ENCODE measurements at regions of chr5 and their contacts with region 1.

Region 1: GRCh38 chr5:139968547-139969261 is 74.4 kb downstream of the NRG2 start:
- DNase-seq: peak; percentile 83 to 87
- ATAC-seq: peak; percentile 94 to 97 (median 96)
- H3K4me3 ChIP-seq: peak overlapping the region in 1 of 10 donors; percentile 13
- H3K27ac ChIP-seq: peak overlapping the region in 1 of 10 donors; percentile 24
- H3K4me1 ChIP-seq: peaks cover 8 to 48% (median 18%) of the 10 kb centered on the region in 9 donors
- H3K27me3 ChIP-seq: no peaks in the 10 kb centered on the region
- CTCF ChIP-seq: peak; percentile 95 to 100 (median 99)

Region 2: DNA sequence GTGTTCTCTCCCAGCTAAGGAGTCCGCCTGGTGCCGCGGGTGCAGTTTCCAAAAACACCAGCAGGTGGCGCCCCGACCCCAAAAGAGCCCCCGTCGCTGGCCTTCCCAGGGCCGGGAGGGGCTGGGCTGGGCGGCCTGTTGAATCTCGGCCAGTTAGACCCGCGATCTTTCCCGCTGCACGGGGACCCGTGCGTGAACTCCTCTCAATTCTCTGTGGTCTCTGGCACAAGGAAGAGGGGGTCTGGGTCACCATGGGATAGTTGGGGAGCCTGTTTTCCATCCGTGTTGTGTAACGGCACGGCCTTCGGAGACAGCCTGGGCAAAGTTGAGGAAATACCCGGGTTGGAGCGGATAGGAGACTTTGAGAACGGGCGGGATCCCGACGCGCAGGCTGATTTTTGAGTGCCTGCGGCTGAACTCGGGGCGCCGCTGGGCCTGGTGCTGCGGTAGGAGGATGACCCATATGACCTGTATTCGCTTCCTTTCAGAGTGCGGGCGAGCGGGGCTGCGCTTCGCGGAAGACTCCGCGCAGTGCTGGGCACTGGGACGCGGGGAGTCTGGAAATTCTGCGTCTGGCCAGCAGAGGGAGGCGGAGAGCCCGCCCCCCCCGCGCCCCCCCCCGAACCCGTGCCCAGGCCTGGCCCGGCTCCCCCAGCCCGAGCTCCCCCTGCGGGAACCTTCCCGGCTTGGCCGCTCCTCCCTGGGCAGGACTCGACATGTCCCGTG is 181.0 kb before region 1 on chr5:
- intact Hi-C with region 1: loop called (anchors 1 to 2 kb)
- DNase-seq: peak; percentile 84 to 92
- ATAC-seq: peak; percentile 86 to 95 (median 91)
- H3K4me3 ChIP-seq: peak overlapping the region; percentile 51 to 68 (median 66)
- H3K27ac ChIP-seq: peak overlapping the region in 9 of 10 donors; percentile 34 to 81 (median 70)
- H3K4me1 ChIP-seq: peaks cover 0 to 14% (median 7%) of the 10 kb centered on the region in 9 donors
- H3K27me3 ChIP-seq: peaks cover 0 to 20% (median 0%) of the 10 kb centered on the region in 7 donors
- CTCF ChIP-seq: peak; percentile 80 to 98 (median 91)

Region 3: DNA sequence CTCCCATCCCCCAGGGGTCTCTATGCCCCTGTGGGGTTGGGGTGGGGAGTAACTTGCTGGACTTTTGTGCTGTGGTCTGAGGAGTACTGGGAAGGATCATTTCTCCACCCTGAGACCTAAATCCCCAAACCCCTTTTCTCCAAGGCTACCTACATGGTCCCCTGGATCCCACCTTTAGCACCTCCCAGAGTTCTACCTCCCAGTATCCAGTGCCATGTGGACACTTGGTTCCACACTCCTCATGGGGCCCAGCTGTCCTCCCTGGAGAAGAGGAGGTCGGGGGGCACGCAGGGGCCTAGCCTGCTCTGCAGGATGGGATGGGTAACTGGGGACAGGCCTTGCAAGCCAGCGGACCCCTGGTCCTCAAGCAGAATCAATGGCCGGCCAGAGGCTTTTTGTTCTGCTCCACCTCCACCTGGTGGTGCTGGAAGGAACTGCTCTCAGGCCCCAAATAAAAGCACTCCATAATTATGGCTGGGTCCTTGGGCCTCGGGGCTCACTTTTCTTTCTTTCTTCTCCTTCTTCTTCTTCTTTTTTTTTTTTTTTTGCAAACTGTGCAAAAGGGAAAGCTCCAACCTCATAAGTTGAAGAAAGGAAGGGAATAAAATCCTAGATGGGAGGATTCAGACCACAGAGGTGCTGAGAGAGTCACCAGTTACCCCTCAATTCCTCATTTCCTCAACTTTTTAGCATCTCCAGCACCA is 104.7 kb before region 1 on chr5:
- intact Hi-C with region 1: loop called in 9 of 10 experiments (anchors 2 to 10 kb)
- DNase-seq: peak; percentile 48 to 65
- ATAC-seq: peak; percentile 43 to 86 (median 77)
- H3K4me3 ChIP-seq: no peak overlapping the region
- H3K27ac ChIP-seq: peak overlapping the region in 4 of 10 donors; percentile 11 to 49 (median 24)
- H3K4me1 ChIP-seq: peaks cover 0 to 23% (median 11%) of the 10 kb centered on the region in 9 donors
- H3K27me3 ChIP-seq: no peaks in the 10 kb centered on the region
- CTCF ChIP-seq: peak; percentile 81 to 92 (median 89)

Region 4: DNA sequence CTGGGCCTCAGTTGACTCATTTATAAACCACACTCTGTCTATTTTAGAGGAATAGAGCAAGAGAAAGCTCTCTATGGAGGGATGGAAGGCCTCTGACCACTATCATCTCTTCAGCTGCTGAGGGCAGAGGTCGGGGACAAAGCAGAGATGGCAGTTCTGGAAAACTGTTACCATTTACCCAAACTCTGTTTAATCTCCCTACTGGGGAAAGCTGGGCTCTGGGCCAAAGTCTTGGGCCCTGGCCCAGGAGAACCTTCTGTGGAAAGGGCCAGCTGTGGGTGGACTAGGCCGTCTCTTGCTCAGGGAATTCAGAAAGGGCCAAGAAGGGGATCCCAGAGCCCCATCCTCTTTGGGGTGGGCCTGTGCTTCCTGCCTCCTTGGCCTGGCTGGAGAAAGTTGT is 73.1 kb before region 1 on chr5:
- intact Hi-C with region 1: loop called in 1 of 10 experiments (anchors 10 kb)
- DNase-seq: peak in 1 of 2 donors; percentile 50
- ATAC-seq: peak in 4 of 8 donors; percentile 18 to 41 (median 29)
- H3K4me3 ChIP-seq: no peak overlapping the region
- H3K27ac ChIP-seq: peak overlapping the region in 1 of 10 donors; percentile 26
- H3K4me1 ChIP-seq: peaks cover 3 to 32% (median 18%) of the 10 kb centered on the region in 9 donors
- H3K27me3 ChIP-seq: peaks cover 0 to under 1% (median 0%) of the 10 kb centered on the region in 7 donors
- CTCF ChIP-seq: no peak

Region 5: GRCh38 chr5:140157032-140157803 is 188.5 kb after region 1 on chr5:
- intact Hi-C with region 1: loop called in 3 of 10 experiments (anchors 5 to 10 kb)
- DNase-seq: peak; percentile 91
- ATAC-seq: peak; percentile 94 to 97 (median 96)
- H3K4me3 ChIP-seq: peak overlapping the region in 9 of 10 donors; percentile 27 to 58 (median 44)
- H3K27ac ChIP-seq: peak overlapping the region in 9 of 10 donors; percentile 39 to 74 (median 70)
- H3K4me1 ChIP-seq: peaks cover 0 to 22% (median 13%) of the 10 kb centered on the region in 9 donors
- H3K27me3 ChIP-seq: no peaks in the 10 kb centered on the region
- CTCF ChIP-seq: peak; percentile 87 to 93 (median 90)

Measured in heart right ventricle (tissue), 16 donors.